A673 (cell line): ENCODE measurements at regions of chr19 and their contacts with region 1.

Region 1: GRCh38 chr19:34041925-34042521 is 130.3 kb upstream of the LSM14A start:
- DNase-seq: peak; percentile 71
- H3K4me3 ChIP-seq: no peak overlapping the region
- H3K27ac ChIP-seq: no peak overlapping the region
- H3K4me1 ChIP-seq: no peaks in the 10 kb centered on the region
- H3K27me3 ChIP-seq: no peaks in the 10 kb centered on the region
- CTCF ChIP-seq: peak; percentile 97

Region 2: DNA sequence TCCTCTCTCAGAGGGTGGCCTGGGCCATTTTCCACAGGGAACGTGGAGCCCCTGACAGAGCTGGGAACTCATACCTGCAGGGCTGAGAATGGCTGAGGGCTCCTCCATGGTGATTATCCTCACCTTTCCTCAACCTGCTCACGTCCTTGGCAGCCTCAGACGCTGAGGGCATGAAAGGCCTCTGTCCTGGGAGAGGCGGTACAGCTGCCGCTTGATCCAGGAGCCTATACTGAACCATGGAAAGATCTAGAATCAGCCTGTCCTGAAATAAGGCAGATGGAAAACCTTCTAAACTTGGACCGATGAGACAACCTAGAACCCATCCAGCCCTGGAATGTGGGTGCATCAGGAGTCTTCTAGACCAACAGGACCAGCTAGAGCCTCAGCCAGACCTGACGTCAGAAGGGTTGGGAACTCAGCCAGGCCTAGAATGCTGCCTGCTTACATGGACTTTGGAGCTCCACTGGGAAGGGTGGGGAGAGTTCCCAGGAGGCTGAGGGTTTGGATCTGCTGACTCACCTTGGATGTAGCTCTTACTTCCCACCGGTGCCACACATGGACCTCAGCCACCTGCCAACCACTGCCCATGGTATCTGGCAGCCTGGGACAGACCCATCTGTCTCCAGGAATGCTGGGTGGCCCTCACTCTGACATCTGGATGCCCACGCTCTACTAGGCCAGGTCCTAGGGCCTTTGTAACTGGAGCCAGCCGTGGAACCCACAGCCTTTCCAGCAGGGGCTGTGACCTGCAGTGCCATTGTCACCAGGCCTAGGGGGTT is 237.8 kb before region 1 on chr19:
- CTCF ChIA-PET with region 1: no interaction called
- POLR2A ChIA-PET with region 1: no interaction called
- intact Hi-C with region 1: no loop called
- DNase-seq: no peak
- H3K4me3 ChIP-seq: no peak overlapping the region
- H3K27ac ChIP-seq: no peak overlapping the region
- H3K4me1 ChIP-seq: no peaks in the 10 kb centered on the region
- H3K27me3 ChIP-seq: no peaks in the 10 kb centered on the region
- CTCF ChIP-seq: no peak

Region 3: DNA sequence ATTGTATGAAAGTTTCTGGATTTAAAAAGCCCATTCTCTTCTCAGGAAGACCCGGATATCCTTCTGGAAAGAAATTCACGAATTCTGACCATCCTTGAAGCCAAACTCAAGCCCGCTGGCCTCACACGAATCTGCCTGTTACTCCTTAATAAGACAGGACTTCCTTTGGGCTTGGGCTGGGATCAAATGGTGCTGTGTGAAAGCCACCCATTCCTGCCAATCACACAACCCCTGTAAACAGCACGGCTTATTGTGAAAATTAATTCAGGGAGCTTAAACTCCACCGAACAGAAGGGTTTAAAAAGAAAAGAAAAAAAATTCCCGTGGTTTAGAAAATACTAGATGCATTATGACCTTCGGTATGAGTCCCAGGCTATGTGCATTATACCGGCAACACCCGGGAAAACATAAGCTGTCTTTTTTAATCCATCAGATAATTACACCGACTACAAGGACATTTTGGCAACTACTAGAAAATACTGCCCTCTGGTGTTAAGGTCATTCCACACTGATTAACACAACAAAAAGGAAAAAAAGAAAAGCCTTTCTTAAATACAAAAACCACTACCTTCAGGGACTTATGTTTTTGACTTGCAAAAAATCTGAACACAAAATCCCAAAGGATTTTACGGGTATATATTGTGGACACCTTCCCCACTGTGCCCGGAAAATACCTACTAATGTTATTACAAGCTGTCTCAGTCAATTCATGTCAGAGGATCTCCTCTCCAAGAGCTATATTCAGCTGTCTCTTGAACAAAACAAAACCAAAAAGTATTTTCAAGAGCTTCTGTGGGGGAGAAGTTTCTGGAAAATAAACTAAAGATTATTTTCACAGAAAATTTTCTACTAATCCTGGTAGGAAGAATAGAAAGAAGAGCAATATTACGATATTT is 54.2 kb after region 1 on chr19:
- CTCF ChIA-PET with region 1: interaction called, 15 read pairs
- POLR2A ChIA-PET with region 1: no interaction called
- intact Hi-C with region 1: no loop called
- DNase-seq: peak; percentile 74
- H3K4me3 ChIP-seq: no peak overlapping the region
- H3K27ac ChIP-seq: no peak overlapping the region
- H3K4me1 ChIP-seq: no peaks in the 10 kb centered on the region
- H3K27me3 ChIP-seq: no peaks in the 10 kb centered on the region
- CTCF ChIP-seq: peak; percentile 71

Region 4: DNA sequence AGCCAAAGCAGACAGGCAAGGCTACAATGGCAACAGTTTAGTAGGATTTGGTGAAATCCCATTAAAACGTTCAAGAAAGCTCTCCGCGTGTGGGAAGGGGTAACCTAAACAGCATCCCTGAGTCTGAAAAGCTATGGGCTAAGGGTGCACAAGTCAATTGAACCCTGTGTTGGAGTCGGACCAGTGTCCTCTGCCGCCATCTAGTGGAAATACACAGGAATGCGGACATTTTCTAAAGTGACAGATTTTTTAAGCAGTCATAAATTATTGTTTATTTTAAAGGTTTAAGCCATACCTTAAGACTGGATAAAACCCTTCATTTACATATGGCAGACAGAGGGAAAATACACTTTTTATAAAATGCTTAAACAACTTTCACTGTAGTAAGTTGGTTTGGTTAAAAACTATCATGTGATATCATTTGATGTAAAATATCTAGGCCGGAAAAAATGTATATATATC is 103.7 kb after region 1 on chr19:
- CTCF ChIA-PET with region 1: interaction called, 12 read pairs
- POLR2A ChIA-PET with region 1: no interaction called
- intact Hi-C with region 1: loop called (anchors 2 kb)
- DNase-seq: peak; percentile 72
- H3K4me3 ChIP-seq: no peak overlapping the region
- H3K27ac ChIP-seq: no peak overlapping the region
- H3K4me1 ChIP-seq: no peaks in the 10 kb centered on the region
- H3K27me3 ChIP-seq: no peaks in the 10 kb centered on the region
- CTCF ChIP-seq: peak; percentile 87

Region 5: GRCh38 chr19:34345947-34346351 is 303.9 kb after region 1 on chr19:
- CTCF ChIA-PET with region 1: no interaction called
- POLR2A ChIA-PET with region 1: no interaction called
- intact Hi-C with region 1: loop called (anchors 10 kb)
- DNase-seq: peak; percentile 89
- H3K4me3 ChIP-seq: no peak overlapping the region
- H3K27ac ChIP-seq: no peak overlapping the region
- H3K4me1 ChIP-seq: no peaks in the 10 kb centered on the region
- H3K27me3 ChIP-seq: no peaks in the 10 kb centered on the region
- CTCF ChIP-seq: peak; percentile 96